ENCODE measurements at regions of chr16 and their contacts with region 1.

Region 1: GRCh38 chr16:11915644-11916523 is at the start of gene GSPT1:
- DNase-seq: peak; percentile 100
- H3K4me3 Mint-ChIP-seq: peak within 1 kb of the TSS; percentile 91
- H3K27ac Mint-ChIP-seq: peak within 1 kb of the TSS; percentile 94
- H3K4me1 Mint-ChIP-seq: peaks cover 32% of the 10 kb centered on the region
- H3K27me3 Mint-ChIP-seq: no peaks in the 10 kb centered on the region
- total RNA-seq, gene GSPT1: 165 to 175 TPM

Region 2: GRCh38 chr16:10944249-10945064 is 971.4 kb before region 1 on chr16 and contains the start of gene CLEC16A:
- CTCF ChIA-PET with region 1: no interaction called
- intact Hi-C with region 1: loop called (anchors 5 kb)
- DNase-seq: peak; percentile 97
- H3K4me3 Mint-ChIP-seq: peak within 1 kb of the TSS; percentile 81
- H3K27ac Mint-ChIP-seq: peak within 1 kb of the TSS; percentile 70
- H3K4me1 Mint-ChIP-seq: peaks cover 61% of the 10 kb centered on the region
- H3K27me3 Mint-ChIP-seq: no peaks in the 10 kb centered on the region
- total RNA-seq, gene CLEC16A: 18.4 to 20.1 TPM

Region 3: DNA sequence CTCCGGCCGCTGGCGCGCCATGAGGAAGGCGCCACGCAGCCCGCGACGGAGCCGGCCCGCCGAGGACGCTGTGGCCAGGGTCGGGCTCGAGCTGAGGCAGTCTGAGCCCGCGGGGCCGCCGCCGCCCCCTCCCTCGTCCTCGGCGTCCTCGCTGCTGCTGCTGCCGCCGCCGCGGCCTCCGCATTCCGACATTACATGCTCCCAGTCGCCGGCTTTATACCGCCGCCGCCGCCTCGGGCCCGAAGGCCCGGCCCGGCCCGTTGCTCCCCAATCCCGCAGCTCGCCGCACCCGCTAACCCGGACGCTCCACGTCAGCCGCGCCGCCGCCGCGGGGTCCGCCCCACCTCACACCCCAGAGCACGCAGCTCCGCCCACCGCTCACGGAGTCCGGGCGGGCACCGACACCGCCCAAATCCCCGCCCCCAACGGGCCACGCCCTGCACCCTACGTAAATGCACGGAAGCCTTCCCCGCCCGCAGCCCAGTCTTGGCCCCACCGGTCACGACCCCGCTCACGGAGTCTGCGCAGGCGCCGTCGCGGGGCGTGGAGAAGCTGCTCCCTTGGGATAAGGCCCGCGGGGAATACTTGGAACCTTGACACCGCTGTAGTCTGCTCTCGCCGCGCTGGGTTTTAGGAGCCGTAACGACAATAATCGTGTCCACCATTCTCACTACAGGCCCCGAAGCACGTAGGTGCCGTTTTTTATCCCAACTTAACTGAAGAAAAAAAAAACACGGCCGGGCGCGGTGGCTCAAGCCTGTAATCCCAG is 173.2 kb before region 1 on chr16 and contains the start of gene TXNDC11:
- CTCF ChIA-PET with region 1: no interaction called
- intact Hi-C with region 1: loop called (anchors 1 kb)
- DNase-seq: peak; percentile 99
- H3K4me3 Mint-ChIP-seq: peak within 1 kb of the TSS; percentile 91
- H3K27ac Mint-ChIP-seq: peak within 1 kb of the TSS; percentile 96
- H3K4me1 Mint-ChIP-seq: peaks cover 48% of the 10 kb centered on the region
- H3K27me3 Mint-ChIP-seq: no peaks in the 10 kb centered on the region
- total RNA-seq, gene TXNDC11: 24.6 to 25.5 TPM

Region 4: GRCh38 chr16:11797166-11797956 is 118.5 kb before region 1 on chr16 and contains the start of gene ZC3H7A:
- CTCF ChIA-PET with region 1: no interaction called
- intact Hi-C with region 1: loop called (anchors 2 kb)
- DNase-seq: peak; percentile 95
- H3K4me3 Mint-ChIP-seq: peak within 1 kb of the TSS; percentile 92
- H3K27ac Mint-ChIP-seq: peak within 1 kb of the TSS; percentile 93
- H3K4me1 Mint-ChIP-seq: peaks cover 72% of the 10 kb centered on the region
- H3K27me3 Mint-ChIP-seq: no peaks in the 10 kb centered on the region
- total RNA-seq, gene ZC3H7A: 123 to 127 TPM

Region 5: GRCh38 chr16:11843861-11844260 is 72.0 kb before region 1 on chr16:
- CTCF ChIA-PET with region 1: no interaction called
- intact Hi-C with region 1: no loop called
- DNase-seq: no peak
- H3K4me3 Mint-ChIP-seq: no peak overlapping the region
- H3K27ac Mint-ChIP-seq: no peak overlapping the region
- H3K4me1 Mint-ChIP-seq: peaks cover 27% of the 10 kb centered on the region
- H3K27me3 Mint-ChIP-seq: no peaks in the 10 kb centered on the region

Region 6: GRCh38 chr16:11896777-11897176 is 19.1 kb before region 1 on chr16:
- CTCF ChIA-PET with region 1: no interaction called
- intact Hi-C with region 1: loop called (anchors 2 kb)
- DNase-seq: peak; percentile 41
- H3K4me3 Mint-ChIP-seq: no peak overlapping the region
- H3K27ac Mint-ChIP-seq: peak overlapping the region; percentile 74
- H3K4me1 Mint-ChIP-seq: peaks cover 48% of the 10 kb centered on the region
- H3K27me3 Mint-ChIP-seq: no peaks in the 10 kb centered on the region

Region 7: GRCh38 chr16:12803203-12804097 is 887.6 kb after region 1 on chr16 and contains the start of gene CPPED1:
- CTCF ChIA-PET with region 1: no interaction called
- intact Hi-C with region 1: loop called (anchors 5 kb)
- DNase-seq: peak; percentile 92
- H3K4me3 Mint-ChIP-seq: peak within 1 kb of the TSS; percentile 91
- H3K27ac Mint-ChIP-seq: peak within 1 kb of the TSS; percentile 90
- H3K4me1 Mint-ChIP-seq: peaks cover 20% of the 10 kb centered on the region
- H3K27me3 Mint-ChIP-seq: no peaks in the 10 kb centered on the region
- total RNA-seq, gene CPPED1: 6.4 to 6.5 TPM

Measured in activated naive CD4-positive, alpha-beta T cell treated with anti-CD3 and anti-CD28 coated beads for 36 hours (primary cell).